Right ventricle myocardium inferior (tissue), 1 donor: ENCODE measurements at regions of chr15 and their contacts with region 1.

Region 1: DNA sequence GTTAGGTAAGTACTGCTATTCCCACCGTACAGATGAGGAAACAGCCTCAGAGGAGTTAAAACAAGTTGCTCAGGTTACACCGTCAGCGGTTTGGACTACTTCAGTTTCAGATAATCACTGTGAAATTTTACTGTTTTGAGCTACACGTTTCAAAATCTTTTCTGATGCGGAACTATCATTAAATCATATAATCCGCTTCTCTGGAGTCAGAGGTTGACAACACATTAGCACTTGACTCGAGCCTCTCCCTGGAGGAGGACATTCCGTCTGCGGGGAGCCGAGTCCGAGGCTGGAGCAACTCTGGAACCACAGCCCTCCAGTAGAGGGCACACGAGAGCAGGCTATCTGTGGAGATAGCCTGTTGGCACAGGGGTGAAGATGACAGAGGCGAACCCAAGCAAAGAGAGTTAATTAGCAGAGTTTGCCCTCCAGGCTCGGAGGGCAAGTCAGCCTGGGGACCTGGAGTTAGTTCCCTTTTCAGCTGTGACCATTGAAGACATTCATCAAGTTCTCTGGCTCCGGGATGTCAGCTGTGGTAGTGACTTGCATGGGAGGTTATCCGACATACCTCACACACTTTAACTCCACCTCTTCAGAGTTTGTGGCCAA is 131.2 kb downstream of the IGF1R start:
- DNase-seq: peak; percentile 83
- ATAC-seq: peak; percentile 90

Region 2: DNA sequence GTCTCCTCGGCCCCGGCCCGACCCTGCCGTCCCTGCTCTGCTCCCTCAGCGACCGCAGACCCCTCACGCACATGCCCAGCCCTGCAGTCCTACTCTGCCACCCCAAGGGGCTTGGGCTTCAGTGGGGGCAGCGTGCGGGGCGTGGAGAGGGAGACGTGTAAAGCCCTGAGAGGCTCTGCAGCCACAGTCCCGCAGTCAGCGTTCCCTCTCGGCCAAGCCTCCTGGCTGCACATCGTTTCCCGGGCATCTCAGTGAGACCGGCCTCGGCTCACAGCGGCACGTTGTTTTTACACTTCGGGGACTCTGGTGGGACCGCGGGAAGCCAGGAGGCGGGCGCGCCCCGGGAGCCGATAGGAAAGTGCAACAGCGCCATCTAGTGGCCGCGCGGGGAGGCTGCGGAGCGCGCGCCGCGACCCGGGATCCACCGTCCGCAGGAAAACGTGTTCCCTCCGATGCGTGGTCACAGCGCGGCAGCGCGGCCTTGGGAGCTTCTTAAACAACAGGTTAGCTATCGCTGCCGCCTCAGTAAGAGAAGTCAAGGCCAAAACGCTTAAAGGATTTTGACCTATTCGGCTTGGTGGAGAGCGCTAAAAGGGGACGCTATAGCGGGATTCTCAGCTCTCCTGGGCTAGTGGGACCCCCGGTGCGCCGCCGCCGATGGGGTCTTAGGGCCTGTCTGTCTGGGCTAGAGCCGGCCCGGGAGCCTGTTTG is 358.0 kb before region 1 on chr15:
- intact Hi-C with region 1: no loop called
- DNase-seq: peak; percentile 85
- ATAC-seq: peak; percentile 82

Region 3: GRCh38 chr15:98518823-98519561 is 260.6 kb before region 1 on chr15:
- intact Hi-C with region 1: loop called (anchors 1 kb)
- DNase-seq: no peak
- ATAC-seq: peak; percentile 64

Region 4: GRCh38 chr15:98647774-98648653 is 131.6 kb before region 1 on chr15 and contains the start of gene IGF1R:
- intact Hi-C with region 1: loop called (anchors 2 kb)
- DNase-seq: peak; percentile 94
- ATAC-seq: peak; percentile 90
- total RNA-seq, gene IGF1R: 26.3 TPM

Region 5: GRCh38 chr15:98671060-98672008 is 108.2 kb before region 1 on chr15:
- intact Hi-C with region 1: loop called (anchors 5 kb)
- DNase-seq: no peak
- ATAC-seq: no peak

Region 6: DNA sequence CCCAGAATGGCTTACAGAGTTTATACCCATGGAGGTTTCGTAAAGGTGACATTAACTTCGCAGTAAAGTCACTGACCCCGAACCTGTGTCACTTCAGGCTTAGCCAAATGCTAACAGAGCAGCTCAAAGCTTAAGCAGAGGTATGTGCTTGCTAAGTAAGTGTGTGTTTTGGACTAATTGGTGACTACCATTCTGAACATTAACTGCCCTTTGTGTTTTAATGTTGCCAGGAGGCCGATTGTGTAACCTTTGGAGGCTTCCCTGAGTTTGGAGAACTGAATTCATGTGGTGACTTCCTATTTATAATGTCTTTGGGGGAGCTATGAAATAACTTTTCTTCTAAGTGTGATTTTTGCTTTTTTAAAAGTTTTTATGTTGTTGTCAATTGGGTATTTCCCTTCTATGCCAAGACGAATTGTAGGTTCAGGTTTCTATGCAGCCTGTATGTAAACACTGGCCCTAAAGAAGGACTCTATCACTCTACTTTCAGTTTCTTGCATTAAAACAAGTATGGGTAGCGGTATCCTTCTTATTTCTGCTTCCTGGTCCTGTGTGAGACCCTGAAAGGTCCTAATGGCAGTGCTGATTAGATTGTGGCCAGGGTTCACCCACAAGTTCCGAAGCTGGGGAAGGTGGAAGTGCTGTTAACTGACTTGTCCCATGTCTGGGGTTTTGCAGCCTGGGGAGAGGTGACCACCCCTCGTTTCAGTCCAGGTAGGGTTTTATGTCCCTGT is 44.9 kb before region 1 on chr15:
- intact Hi-C with region 1: loop called (anchors 5 kb)
- DNase-seq: no peak
- ATAC-seq: no peak